Activated naive CD4-positive, alpha-beta T cell treated with anti-CD3 and anti-CD28 coated beads for 36 hours (primary cell): ENCODE measurements at regions of chr17 and their contacts with region 1.

Region 1: GRCh38 chr17:44350733-44351226 is 5.7 kb downstream of the GRN start:
- DNase-seq: peak; percentile 81
- H3K4me3 Mint-ChIP-seq: no peak overlapping the region
- H3K27ac Mint-ChIP-seq: no peak overlapping the region
- H3K4me1 Mint-ChIP-seq: peaks cover 8% of the 10 kb centered on the region
- H3K27me3 Mint-ChIP-seq: peaks cover 3% of the 10 kb centered on the region

Region 2: DNA sequence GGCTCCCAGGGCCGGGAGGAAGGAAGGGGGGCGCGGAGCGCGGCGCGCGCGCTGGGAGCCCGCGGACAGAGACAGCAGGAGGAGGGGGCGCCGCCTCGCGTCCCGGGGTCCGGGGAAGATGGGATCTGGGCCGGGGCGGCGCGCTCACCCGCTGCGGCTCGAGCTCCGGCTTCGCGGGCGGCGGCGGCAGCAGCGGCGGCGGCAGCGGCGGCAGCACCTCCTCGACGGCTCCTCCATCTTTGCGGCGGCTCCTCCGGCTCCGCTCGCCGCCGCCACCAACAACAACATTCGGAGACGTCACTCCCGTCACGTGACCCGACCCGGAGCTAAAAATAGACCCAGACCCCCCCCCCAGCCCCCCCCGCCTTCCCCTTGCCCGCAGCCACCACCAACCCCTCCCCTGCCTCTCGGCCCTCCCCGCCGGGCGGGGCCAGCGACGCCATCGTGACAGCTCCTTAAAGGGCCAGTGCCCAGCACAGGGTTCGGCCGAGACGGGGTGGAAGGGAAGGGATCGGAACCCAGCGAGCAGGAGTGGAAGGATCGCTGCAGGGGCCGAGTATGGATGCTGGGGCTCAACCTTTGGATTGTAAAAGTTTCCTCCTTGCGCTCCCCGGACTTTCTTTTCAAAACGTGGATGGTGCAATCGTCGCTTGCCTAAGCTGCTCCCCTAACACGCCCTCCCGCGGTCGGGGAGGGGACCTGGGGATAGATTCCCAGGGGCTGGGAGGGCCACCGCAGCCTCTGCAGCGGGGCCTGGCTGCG is 227.2 kb before region 1 on chr17 and contains the start of gene HDAC5:
- CTCF ChIA-PET with region 1: no interaction called
- intact Hi-C with region 1: loop called (anchors 5 kb)
- DNase-seq: peak; percentile 97
- H3K4me3 Mint-ChIP-seq: peak within 1 kb of the TSS; percentile 96
- H3K27ac Mint-ChIP-seq: peak within 1 kb of the TSS; percentile 97
- H3K4me1 Mint-ChIP-seq: peaks cover 32% of the 10 kb centered on the region
- H3K27me3 Mint-ChIP-seq: no peaks in the 10 kb centered on the region
- total RNA-seq, gene HDAC5: 17.9 to 18.9 TPM

Region 3: GRCh38 chr17:44363613-44364159 is 12.9 kb after region 1 on chr17 and contains the start of gene FAM171A2:
- CTCF ChIA-PET with region 1: interaction called, 13 read pairs
- intact Hi-C with region 1: no loop called
- DNase-seq: peak; percentile 66
- H3K4me3 Mint-ChIP-seq: peak within 1 kb of the TSS; percentile 63
- H3K27ac Mint-ChIP-seq: no peak within 1 kb of the TSS
- H3K4me1 Mint-ChIP-seq: peaks cover 4% of the 10 kb centered on the region
- H3K27me3 Mint-ChIP-seq: peaks cover 15% of the 10 kb centered on the region
- total RNA-seq, gene FAM171A2: 0.12 to 0.21 TPM

Region 4: DNA sequence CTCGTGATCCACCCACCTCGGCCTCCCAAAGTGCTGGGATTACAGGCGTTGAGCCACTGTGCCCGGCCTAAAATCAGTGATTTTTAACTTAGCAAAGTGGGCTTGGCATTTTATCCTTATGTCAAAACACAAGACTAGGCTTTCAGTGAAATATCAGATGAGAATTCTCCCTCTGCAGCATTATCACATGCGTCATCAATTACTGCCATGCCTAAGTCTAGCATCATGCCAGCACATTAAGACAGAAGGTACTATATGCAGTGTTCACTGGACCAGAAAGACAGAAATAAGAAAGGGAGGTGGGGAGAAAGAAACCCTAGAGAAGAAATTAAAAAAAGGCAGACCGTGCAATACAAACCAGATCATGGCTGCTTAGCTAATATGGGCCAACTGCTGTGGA is 122.6 kb after region 1 on chr17:
- CTCF ChIA-PET with region 1: no interaction called
- intact Hi-C with region 1: no loop called
- DNase-seq: no peak
- H3K4me3 Mint-ChIP-seq: no peak overlapping the region
- H3K27ac Mint-ChIP-seq: no peak overlapping the region
- H3K4me1 Mint-ChIP-seq: peaks cover 16% of the 10 kb centered on the region
- H3K27me3 Mint-ChIP-seq: no peaks in the 10 kb centered on the region